ENCODE measurements at regions of chr1 and their contacts with region 1.

Region 1: GRCh38 chr1:244599937-244600350 is 53.0 kb upstream of the DESI2 start:
- DNase-seq: no peak
- H3K4me3 ChIP-seq: peak overlapping the region in 3 of 4 donors; percentile 14 to 37 (median 29)
- H3K27ac ChIP-seq: peak overlapping the region in 3 of 4 donors; percentile 53 to 75 (median 63)
- H3K4me1 ChIP-seq: peaks cover 0 to 10% (median 0%) of the 10 kb centered on the region in 3 donors
- H3K27me3 ChIP-seq: no peaks in the 10 kb centered on the region
- CTCF ChIP-seq: no peak
- POLR2A ChIP-seq: no peak

Region 2: DNA sequence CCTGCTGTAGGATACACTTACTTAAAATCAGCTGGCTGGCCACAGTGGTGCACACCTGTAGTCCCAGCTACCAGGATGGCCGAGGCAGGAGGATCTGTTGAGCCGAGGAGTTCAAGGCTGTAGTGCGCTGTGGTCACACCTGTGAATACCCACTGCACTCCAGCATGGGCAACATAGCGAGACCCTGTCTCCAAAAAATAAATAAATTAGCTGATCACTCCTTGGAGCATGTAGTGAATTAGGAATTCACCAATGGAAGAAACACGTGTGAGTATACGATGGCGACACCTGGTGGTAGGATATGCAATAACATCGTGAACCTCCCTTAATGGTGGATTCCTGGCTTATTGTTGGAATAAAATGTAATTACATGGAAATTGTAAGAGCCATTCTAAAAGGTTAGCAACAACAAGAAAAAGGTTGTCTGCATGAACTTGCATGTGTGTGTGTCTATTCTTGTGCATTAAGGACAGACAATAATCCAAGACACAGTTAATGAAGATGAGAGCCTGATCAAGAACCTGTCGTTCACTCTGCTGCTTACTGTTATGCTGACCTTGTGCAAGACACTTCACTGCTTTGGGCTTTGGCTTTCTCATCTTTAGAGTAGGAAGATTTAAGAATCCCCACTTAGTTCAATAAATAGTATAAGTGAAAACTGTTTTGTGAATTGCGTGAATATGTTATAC is 196.9 kb after region 1 on chr1:
- intact Hi-C with region 1: loop called (anchors 2 kb)
- DNase-seq: no peak
- H3K4me3 ChIP-seq: no peak overlapping the region
- H3K27ac ChIP-seq: no peak overlapping the region
- H3K4me1 ChIP-seq: no peaks in the 10 kb centered on the region
- H3K27me3 ChIP-seq: no peaks in the 10 kb centered on the region
- CTCF ChIP-seq: peak; percentile 75 to 92 (median 86)
- POLR2A ChIP-seq: no peak

Measured in esophagus squamous epithelium (tissue), 5 donors.